PC-3 (cell line): ENCODE measurements at regions of chr2 and their contacts with region 1.

Region 1: DNA sequence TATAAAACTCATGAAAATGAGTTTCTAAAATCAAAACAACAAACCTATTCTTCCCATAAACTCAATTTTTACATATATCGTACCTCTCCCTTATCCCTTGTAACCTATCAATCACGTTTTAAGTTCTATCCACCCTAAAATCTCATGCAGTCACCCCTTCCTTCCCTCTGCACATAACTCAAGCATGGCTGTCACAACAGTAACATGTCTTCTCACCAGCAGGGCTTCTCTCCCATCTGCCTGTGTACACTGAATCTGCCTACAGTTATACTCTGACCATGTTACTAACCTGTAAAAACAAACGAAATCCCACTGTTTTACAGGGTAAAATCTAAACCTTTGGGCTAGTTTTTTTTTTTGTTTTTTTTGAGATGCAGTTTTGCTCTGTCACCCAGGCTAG is 68.2 kb downstream of the MAP4K3 start:
- DNase-seq: no peak
- ATAC-seq: no peak
- H3K4me3 ChIP-seq: no peak overlapping the region
- H3K27ac ChIP-seq: no peak overlapping the region
- H3K4me1 ChIP-seq: peaks cover 10% of the 10 kb centered on the region
- H3K27me3 ChIP-seq: no peaks in the 10 kb centered on the region
- CTCF ChIP-seq: no peak

Region 2: GRCh38 chr2:39289609-39290008 is 79.2 kb before region 1 on chr2:
- CTCF ChIA-PET with region 1: no interaction called
- POLR2A ChIA-PET with region 1: interaction called, 15 read pairs
- intact Hi-C with region 1: no loop called
- DNase-seq: no peak
- ATAC-seq: peak; percentile 49
- H3K4me3 ChIP-seq: no peak overlapping the region
- H3K27ac ChIP-seq: no peak overlapping the region
- H3K4me1 ChIP-seq: no peaks in the 10 kb centered on the region
- H3K27me3 ChIP-seq: no peaks in the 10 kb centered on the region
- CTCF ChIP-seq: no peak